Esophagus squamous epithelium (tissue), 5 donors: ENCODE measurements at regions of chr7 and their contacts with region 1.

Region 1: GRCh38 chr7:106112117-106112971 is at the start of gene SYPL1:
- DNase-seq: peak; percentile 70
- H3K4me3 ChIP-seq: peak within 1 kb of the TSS; percentile 69 to 79 (median 78)
- H3K27ac ChIP-seq: peak within 1 kb of the TSS; percentile 97 to 99 (median 98)
- H3K4me1 ChIP-seq: peaks cover 15 to 48% (median 24%) of the 10 kb centered on the region in 3 donors
- H3K27me3 ChIP-seq: no peaks in the 10 kb centered on the region
- CTCF ChIP-seq: peak in 2 of 6 experiments; percentile 15 to 42
- POLR2A ChIP-seq: peak in 2 of 4 donors; percentile 37 to 70
- total RNA-seq, gene SYPL1: 105 to 170 (median 148) TPM

Region 2: GRCh38 chr7:105816266-105816828 is 296.0 kb before region 1 on chr7:
- intact Hi-C with region 1: no loop called
- DNase-seq: no peak
- H3K4me3 ChIP-seq: no peak overlapping the region
- H3K27ac ChIP-seq: no peak overlapping the region
- H3K4me1 ChIP-seq: peaks cover 0 to 8% (median 0%) of the 10 kb centered on the region in 3 donors
- H3K27me3 ChIP-seq: no peaks in the 10 kb centered on the region
- CTCF ChIP-seq: no peak
- POLR2A ChIP-seq: no peak

Region 3: GRCh38 chr7:106009403-106010226 is 102.7 kb before region 1 on chr7:
- intact Hi-C with region 1: no loop called
- DNase-seq: peak; percentile 65
- H3K4me3 ChIP-seq: peak overlapping the region in 1 of 4 donors; percentile 47
- H3K27ac ChIP-seq: peak overlapping the region in 3 of 4 donors; percentile 15 to 61 (median 61)
- H3K4me1 ChIP-seq: peaks cover 12 to 23% (median 15%) of the 10 kb centered on the region in 3 donors
- H3K27me3 ChIP-seq: no peaks in the 10 kb centered on the region
- CTCF ChIP-seq: peak; percentile 92 to 98 (median 96)
- POLR2A ChIP-seq: no peak

Region 4: DNA sequence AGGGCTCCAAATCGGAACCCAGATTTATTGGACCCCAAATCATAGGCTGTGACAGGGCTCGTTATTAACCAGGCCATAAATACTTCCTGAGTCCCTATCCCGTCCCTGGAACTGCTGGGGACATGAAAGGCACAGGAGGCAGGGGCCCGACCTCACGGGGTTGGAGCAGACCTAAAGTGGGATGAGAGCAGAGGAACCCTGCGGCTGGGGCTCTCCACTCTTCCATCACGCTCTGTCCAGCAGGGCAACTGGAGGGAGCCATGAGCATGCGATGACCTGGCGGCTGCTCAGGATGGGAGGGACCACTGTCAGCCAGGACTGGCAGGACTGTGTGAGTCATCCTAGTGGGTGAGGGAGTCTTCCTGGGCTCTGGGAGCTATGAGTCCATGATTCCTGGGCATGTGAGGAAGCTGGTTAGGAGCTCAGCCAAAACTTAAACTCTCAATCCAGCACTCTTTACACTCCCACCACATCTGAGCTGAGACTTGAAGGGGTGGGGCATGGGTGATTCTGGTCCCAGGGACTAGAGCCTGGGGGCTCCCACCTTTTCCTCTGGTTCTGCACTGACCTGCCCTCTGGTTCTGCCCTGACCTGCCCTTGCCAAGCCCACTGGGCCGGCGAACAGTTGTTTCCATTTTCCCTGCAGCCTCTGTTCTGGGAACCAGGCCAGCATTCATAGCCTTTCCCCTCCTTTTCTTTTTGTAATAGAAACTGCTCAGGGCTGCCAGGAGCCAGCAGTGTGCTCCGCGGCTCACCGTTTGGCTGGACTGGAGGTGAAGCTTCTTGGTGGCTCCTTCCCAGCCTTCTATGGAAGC is 47.4 kb before region 1 on chr7:
- intact Hi-C with region 1: loop called (anchors 10 kb)
- DNase-seq: no peak
- H3K4me3 ChIP-seq: peak overlapping the region in 3 of 4 donors; percentile 30 to 56 (median 32)
- H3K27ac ChIP-seq: peak overlapping the region; percentile 83 to 91 (median 88)
- H3K4me1 ChIP-seq: peaks cover 59 to 100% (median 72%) of the 10 kb centered on the region in 3 donors
- H3K27me3 ChIP-seq: no peaks in the 10 kb centered on the region
- CTCF ChIP-seq: peak in 1 of 6 experiments; percentile 15
- POLR2A ChIP-seq: peak in 2 of 4 donors; percentile 38 to 42